IMR-90 (cell line): ENCODE measurements at regions of chr2 and their contacts with region 1.

Region 1: GRCh38 chr2:133004623-133005022 is 334.6 kb upstream of the LYPD1 start:
- DNase-seq: no peak
- ATAC-seq: no peak
- H3K4me3 ChIP-seq: no peak overlapping the region
- H3K27ac ChIP-seq: no peak overlapping the region
- H3K4me1 ChIP-seq: no peaks in the 10 kb centered on the region; the same call in 1 of the 2 replicates
- H3K27me3 ChIP-seq: no peaks in the 10 kb centered on the region
- CTCF ChIP-seq: no peak
- POLR2A ChIP-seq: no peak
- RAD21 ChIP-seq: no peak

Region 2: DNA sequence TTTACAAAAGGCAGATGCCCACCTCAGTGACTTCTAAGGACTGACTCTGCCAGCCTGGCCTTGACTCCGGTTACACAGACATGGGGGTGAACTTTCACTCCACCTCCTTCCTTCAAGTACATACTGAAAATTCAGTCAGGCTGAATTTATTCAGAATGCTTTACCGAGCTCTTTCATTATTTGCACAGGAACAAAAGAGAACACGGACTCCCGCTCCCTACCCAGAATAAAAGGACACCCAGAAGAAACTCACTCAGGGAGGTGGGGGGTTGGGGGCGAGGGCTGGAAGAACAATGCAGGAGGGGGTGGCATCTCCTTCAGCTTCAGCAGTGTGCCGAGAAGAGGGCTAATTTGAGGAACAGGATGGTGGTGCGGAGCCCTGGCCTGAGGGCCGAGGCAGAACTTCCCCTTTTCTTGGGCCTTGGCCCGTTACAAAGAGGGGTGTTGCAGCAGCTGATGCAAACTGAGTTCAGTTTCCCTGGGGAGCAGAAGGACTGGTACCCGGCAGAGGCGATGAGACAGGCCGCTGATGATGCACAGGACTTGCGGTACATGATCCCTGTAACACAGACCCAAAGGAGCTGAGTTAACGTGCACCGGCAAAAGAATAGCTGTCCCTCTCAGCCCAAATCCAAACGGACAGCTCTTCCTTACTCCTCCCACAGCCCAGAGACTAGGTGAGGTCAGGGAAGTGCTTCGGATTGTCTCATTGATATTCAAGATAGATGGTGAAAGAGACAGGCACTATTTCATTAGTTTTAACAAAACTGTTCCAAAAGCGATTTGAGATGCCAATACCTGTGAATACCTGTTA is 358.7 kb before region 1 on chr2:
- CTCF ChIA-PET with region 1: no interaction called
- POLR2A ChIA-PET with region 1: no interaction called
- dilution Hi-C with region 1: no loop called
- in situ Hi-C with region 1: no loop called
- intact Hi-C with region 1: loop called (anchors 10 kb)
- DNase-seq: no peak
- ATAC-seq: no peak
- H3K4me3 ChIP-seq: no peak overlapping the region
- H3K27ac ChIP-seq: no peak overlapping the region
- H3K4me1 ChIP-seq: 0 out of 2 replicates have a peak, but pooled peaks cover 2% of the 10 kb centered on the region
- H3K27me3 ChIP-seq: no peaks in the 10 kb centered on the region
- CTCF ChIP-seq: no peak
- POLR2A ChIP-seq: no peak
- RAD21 ChIP-seq: no peak

Region 3: GRCh38 chr2:132943829-132944228 is 60.8 kb before region 1 on chr2:
- CTCF ChIA-PET with region 1: no interaction called
- POLR2A ChIA-PET with region 1: no interaction called
- dilution Hi-C with region 1: no loop called
- in situ Hi-C with region 1: no loop called
- intact Hi-C with region 1: loop called (anchors 10 kb)
- DNase-seq: peak; percentile 68
- ATAC-seq: no peak; the same call in 1 of the 2 replicates
- H3K4me3 ChIP-seq: no peak overlapping the region
- H3K27ac ChIP-seq: no peak overlapping the region
- H3K4me1 ChIP-seq: no peaks in the 10 kb centered on the region; the same call in 1 of the 2 replicates
- H3K27me3 ChIP-seq: no peaks in the 10 kb centered on the region
- CTCF ChIP-seq: no peak
- POLR2A ChIP-seq: no peak
- RAD21 ChIP-seq: no peak

Region 4: DNA sequence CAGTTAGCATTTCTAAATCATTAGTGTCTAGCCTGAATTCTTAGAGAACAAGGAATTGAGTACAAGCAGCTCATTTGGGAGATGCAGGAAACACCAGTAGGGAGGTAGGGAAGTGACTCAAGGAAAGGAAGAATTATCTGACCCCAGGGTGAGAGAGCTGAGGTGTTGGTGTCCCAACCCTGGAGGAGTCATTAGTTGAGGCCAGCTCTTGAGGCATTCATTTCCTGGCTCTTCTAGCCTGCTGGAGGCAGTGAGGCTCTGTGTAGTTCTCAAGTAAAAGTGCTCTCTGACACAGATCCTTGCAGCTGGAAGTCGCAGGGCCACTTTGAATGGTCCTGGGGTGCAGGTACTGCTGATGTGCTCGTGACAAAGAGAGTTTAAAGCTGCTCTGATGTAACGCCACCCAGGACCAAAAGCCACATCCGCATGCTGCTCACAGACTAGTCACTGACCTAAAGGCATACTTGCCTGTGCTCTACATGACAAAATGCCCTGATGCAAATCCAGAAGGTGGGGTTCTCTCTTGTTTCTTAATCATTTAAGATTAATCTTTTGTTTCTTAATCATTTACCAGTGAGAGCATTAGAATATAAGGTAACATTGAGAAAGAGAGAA is 35.1 kb before region 1 on chr2:
- CTCF ChIA-PET with region 1: no interaction called
- POLR2A ChIA-PET with region 1: no interaction called
- dilution Hi-C with region 1: no loop called
- in situ Hi-C with region 1: no loop called
- intact Hi-C with region 1: no loop called
- DNase-seq: peak; percentile 42
- ATAC-seq: no peak
- H3K4me3 ChIP-seq: no peak overlapping the region
- H3K27ac ChIP-seq: no peak overlapping the region
- H3K4me1 ChIP-seq: peaks cover 2% of the 10 kb centered on the region
- H3K27me3 ChIP-seq: no peaks in the 10 kb centered on the region
- CTCF ChIP-seq: no peak
- POLR2A ChIP-seq: no peak
- RAD21 ChIP-seq: no peak